Breast epithelium (tissue), 4 donors: ENCODE measurements at regions of chr9 and their contacts with region 1.

Region 1: GRCh38 chr9:82320566-82320965 is 332.0 kb downstream of the SPATA31D1 start:
- DNase-seq: no peak
- H3K4me3 ChIP-seq: no peak overlapping the region
- H3K27ac ChIP-seq: no peak overlapping the region
- H3K4me1 ChIP-seq: no peaks in the 10 kb centered on the region
- H3K27me3 ChIP-seq: no peaks in the 10 kb centered on the region
- CTCF ChIP-seq: no peak
- POLR2A ChIP-seq: no peak

Region 2: GRCh38 chr9:82247318-82247717 is 73.2 kb before region 1 on chr9:
- intact Hi-C with region 1: no loop called
- DNase-seq: no peak
- H3K4me3 ChIP-seq: no peak overlapping the region
- H3K27ac ChIP-seq: no peak overlapping the region
- H3K4me1 ChIP-seq: no peaks in the 10 kb centered on the region
- H3K27me3 ChIP-seq: no peaks in the 10 kb centered on the region
- CTCF ChIP-seq: no peak
- POLR2A ChIP-seq: no peak

Region 3: DNA sequence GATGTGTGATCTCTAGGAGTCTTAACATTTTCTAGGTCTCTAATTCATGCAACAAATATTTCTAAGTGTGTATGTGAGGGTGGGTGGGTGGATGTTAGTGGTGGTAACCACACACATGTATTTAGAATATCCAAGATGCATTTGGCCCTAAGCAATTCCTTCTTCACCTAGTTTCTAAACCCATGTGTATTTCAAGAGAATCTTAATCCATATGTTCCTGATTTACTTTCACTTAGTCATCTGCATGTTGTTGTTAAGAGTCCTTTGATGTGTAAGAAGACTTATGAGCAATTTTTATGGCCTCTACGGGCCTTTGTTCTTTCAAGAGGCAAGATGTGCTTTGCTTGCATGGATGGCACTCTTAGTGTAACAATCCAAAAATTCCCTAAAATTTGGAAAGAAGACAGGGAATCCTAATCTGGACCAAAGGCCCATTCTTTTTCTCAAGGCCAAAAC is 49.4 kb before region 1 on chr9:
- intact Hi-C with region 1: loop called (anchors 5 kb)
- DNase-seq: no peak
- H3K4me3 ChIP-seq: no peak overlapping the region
- H3K27ac ChIP-seq: no peak overlapping the region
- H3K4me1 ChIP-seq: peaks cover 0 to 4% of the 10 kb centered on the region in 2 donors
- H3K27me3 ChIP-seq: no peaks in the 10 kb centered on the region
- CTCF ChIP-seq: no peak
- POLR2A ChIP-seq: no peak

Region 4: DNA sequence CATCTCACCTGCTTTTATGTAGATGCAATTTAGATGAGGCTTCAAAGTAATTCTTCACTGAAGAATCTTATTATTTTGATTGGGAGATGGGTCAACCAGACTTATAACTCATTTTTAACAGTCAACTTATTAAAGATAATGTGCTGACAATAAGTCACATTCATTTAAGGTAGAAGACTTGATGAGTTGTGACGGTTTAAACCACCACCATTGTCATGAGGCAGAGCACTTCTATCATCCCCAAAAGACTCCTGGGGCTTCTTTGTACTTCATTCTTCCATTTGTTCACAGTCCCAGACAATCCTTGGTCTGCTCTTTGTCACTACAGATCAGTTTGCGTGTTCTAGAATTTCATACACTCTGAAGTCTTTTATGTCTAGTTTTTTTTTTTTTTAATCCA is 396.2 kb after region 1 on chr9:
- intact Hi-C with region 1: loop called (anchors 5 kb)
- DNase-seq: no peak
- H3K4me3 ChIP-seq: no peak overlapping the region
- H3K27ac ChIP-seq: no peak overlapping the region
- H3K4me1 ChIP-seq: no peaks in the 10 kb centered on the region
- H3K27me3 ChIP-seq: no peaks in the 10 kb centered on the region
- CTCF ChIP-seq: no peak
- POLR2A ChIP-seq: no peak